ENCODE measurements at regions of chr3 and their contacts with region 1.

Region 1: DNA sequence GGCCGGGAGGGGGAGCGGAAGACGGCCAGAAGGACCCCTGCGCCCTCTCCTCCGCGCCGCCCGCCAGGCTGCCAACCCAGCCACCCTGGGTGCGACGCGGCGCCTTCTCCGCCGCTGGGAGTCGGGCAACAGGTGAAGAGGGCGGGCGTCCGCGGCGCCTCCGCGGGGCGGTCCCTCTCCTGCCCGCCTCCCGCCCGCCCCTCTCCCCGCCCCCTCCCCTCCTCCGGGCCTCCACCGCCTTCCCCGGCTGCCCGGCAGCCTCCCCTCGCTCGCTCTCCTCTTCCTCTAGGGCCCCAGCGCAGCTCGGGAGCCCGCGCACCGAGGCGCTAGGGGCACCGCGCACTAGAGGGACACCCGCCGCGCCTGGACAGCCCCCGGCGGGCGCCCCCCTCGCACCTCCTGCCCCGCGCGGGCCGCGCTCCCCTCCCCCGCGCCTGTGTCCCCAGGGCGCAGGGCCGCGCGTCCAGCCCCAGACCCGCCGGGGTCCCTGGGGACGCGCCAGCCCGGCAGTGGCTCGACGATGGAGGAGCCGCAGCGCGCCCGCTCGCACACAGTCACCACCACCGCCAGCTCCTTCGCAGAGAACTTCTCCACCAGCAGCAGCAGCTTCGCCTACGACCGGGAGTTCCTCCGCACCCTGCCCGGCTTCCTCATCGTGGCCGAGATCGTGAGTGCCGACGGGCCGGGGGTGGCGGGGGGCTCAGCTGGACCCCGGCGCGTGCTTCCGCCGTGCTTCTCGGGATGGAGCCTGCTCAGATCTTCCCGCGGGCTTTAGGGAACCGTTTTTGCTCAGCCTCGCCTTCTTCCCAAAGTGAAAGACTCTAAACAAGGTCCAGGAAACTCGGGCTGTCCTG is at the start of gene CMTM8:
- DNase-seq: no peak
- ATAC-seq: peak; percentile 86
- H3K4me3 ChIP-seq: peak within 1 kb of the TSS; percentile 70 to 88
- H3K27ac ChIP-seq: peak within 1 kb of the TSS; percentile 76
- H3K4me1 ChIP-seq: peaks cover 20 to 35% of the 10 kb centered on the region in 2 experiments
- H3K27me3 ChIP-seq: peaks cover 3% of the 10 kb centered on the region; the same call in 1 of the 2 replicates
- CTCF ChIP-seq: no peak
- POLR2A ChIP-seq: no peak
- RAD21 ChIP-seq: no peak; the same call in 1 of the 2 replicates
- total RNA-seq, gene CMTM8: 19.4 TPM

Region 2: GRCh38 chr3:32249184-32249782 is 10.6 kb after region 1 on chr3:
- CTCF ChIA-PET with region 1: interaction called, 10 read pairs
- POLR2A ChIA-PET with region 1: no interaction called
- RAD21 ChIA-PET with region 1: no interaction called
- intact Hi-C with region 1: no loop called
- DNase-seq: peak; percentile 69
- ATAC-seq: peak; percentile 60
- H3K4me3 ChIP-seq: peak overlapping the region in 1 of 2 experiments; percentile 15; a peak in 1 of 4 replicates
- H3K27ac ChIP-seq: peak overlapping the region; percentile 61
- H3K4me1 ChIP-seq: peaks cover 50% of the 10 kb centered on the region in 2 experiments
- H3K27me3 ChIP-seq: no peaks in the 10 kb centered on the region
- CTCF ChIP-seq: no peak
- POLR2A ChIP-seq: no peak
- RAD21 ChIP-seq: 0 out of 2 replicates have a peak, but pooled peaks have one; percentile 14

Region 3: DNA sequence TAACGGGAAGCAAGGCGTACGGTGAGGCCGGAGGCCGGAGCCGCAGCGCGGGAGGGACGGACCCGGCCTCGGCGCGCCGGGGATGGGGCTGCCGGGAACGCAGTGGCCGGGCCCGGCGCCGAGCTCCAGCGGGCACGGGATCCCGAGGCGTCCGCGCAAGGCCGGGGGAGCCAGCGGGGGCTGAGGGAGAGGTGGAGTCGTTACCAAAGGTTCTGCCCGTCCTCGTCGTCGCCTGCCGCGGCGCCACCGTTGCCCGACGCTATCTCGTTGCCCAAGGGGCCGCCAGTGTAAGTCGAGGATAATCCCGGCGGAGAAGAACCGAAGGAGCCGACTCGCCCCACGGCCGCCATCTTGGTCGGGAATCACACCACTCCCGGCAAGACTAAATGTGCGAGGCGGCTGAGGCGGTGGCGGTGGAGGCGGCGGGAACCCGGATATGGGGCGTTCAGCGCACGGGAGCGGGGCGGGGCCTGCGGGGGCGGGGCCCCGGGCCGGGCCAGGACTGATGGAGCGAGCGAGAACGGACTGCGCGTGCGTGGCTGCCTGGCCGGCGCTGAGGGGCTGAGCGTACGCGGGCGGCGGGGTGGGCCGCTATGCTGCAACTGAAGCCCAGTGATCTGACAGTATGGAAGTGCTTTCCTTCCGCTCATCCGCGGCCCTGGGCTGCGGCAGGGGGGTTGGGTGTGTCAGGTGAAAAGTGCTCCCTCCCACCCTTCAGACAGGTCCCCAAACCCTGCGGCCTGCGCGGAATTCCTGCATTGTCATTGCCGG is 331.9 kb after region 1 on chr3 and contains the start of gene DYNC1LI1:
- CTCF ChIA-PET with region 1: no interaction called
- POLR2A ChIA-PET with region 1: no interaction called
- RAD21 ChIA-PET with region 1: no interaction called
- intact Hi-C with region 1: no loop called
- DNase-seq: peak; percentile 82
- ATAC-seq: peak; percentile 92
- H3K4me3 ChIP-seq: peak within 1 kb of the TSS; percentile 79 to 87
- H3K27ac ChIP-seq: peak within 1 kb of the TSS; percentile 97
- H3K4me1 ChIP-seq: peaks cover 7 to 20% of the 10 kb centered on the region in 2 experiments; a peak in 3 of 4 replicates
- H3K27me3 ChIP-seq: no peaks in the 10 kb centered on the region
- CTCF ChIP-seq: no peak
- POLR2A ChIP-seq: peak; percentile 83
- RAD21 ChIP-seq: no peak
- total RNA-seq, gene DYNC1LI1: 39.4 TPM